ENCODE measurements at regions of chr1 and their contacts with region 1.

Region 1: DNA sequence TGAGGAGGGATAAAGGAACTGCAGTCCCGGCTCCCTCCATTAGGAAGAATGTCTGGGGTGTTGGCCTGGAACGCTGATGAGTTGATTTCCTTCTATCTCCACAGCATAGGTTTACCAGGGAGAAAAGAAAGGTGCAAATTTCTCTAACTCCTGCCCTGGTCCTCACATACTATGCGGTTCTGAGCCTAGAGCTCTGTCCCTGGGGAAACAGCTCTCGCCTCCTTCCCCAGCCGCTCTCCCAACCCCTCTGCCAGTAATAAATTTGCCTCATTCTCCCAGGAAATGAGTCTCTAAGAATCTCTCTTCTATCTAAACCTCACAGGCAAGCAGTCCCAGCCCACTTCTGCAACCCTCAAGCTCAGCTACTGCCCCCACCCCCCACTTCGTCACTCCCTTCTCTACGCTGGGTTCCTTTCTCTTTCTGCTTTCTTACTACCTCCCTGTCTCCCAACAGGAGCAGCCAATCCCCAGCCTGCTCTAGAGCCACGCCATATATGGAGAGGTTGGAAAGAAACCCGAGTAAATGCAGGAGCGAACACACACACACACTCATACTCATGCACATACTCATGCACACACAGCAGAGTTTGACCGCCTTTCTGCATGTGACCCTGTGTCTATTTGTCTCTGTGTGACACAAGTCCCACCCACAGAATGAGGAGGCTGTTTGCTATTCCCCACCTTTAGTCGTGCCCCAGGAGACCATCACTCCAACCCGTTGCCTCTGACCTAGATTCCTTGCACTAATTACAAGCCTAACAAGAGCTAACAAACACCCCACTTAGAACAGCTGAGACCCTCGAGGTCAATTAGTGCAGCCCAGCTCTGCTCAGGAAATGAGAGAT is 13.4 kb downstream of the PLEKHO1 start:
- H3K4me3 ChIP-seq: no peak overlapping the region
- H3K27ac ChIP-seq: peak overlapping the region; percentile 28
- H3K4me1 ChIP-seq: no peaks in the 10 kb centered on the region
- CTCF ChIP-seq: no peak

Region 2: DNA sequence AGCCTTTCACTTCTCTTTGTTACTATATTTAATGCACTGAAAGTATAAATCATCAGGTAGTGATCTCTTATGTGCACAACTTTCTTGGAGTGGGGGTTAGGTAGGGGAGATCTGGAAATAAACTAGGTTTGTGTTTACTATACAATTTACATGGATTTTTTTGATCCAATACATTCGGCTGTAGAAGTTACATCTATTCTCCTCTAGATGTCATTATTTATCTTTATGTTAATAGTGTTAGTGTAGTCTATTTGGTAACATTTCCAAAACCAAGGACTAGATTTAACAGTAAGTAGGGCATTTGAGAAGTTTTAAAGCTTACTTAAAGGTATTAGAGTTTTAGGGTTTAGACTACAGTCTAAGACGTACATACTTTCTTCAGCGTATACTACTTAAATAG is 90.1 kb before region 1 on chr1:
- CTCF ChIA-PET with region 1: interaction called, 28 read pairs
- POLR2A ChIA-PET with region 1: interaction called, 3 read pairs
- H3K4me3 ChIP-seq: no peak overlapping the region
- H3K27ac ChIP-seq: no peak overlapping the region
- H3K4me1 ChIP-seq: no peaks in the 10 kb centered on the region
- CTCF ChIP-seq: no peak

Region 3: GRCh38 chr1:150150133-150151021 is 12.7 kb before region 1 on chr1:
- CTCF ChIA-PET with region 1: interaction called, 18 read pairs
- POLR2A ChIA-PET with region 1: interaction called, 4 read pairs
- H3K4me3 ChIP-seq: peak overlapping the region; percentile 61
- H3K27ac ChIP-seq: peak overlapping the region; percentile 62; the same call in 1 of the 2 replicates
- H3K4me1 ChIP-seq: peaks cover 3% of the 10 kb centered on the region; the same call in 1 of the 2 replicates
- CTCF ChIP-seq: no peak

Region 4: DNA sequence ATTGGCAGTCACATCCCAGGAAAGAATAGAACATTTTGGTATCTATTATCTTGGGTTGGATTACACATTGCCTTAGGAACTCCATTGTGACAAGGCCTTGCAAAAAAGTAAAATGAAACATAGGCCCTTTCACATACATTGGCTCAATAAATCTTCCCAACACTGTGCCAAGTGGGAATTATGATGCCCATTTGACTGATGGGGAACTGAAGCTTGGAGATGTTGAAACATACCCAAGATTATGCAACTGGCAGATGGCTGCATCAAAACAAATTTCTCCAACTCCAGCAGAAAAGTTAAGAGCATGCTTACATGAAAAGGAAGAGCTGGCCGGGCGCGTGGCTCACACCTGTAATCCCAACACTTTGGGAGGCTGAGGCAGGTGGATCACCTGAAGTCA is 13.5 kb after region 1 on chr1:
- CTCF ChIA-PET with region 1: interaction called, 10 read pairs
- POLR2A ChIA-PET with region 1: interaction called, 5 read pairs
- H3K4me3 ChIP-seq: no peak overlapping the region
- H3K27ac ChIP-seq: no peak overlapping the region
- H3K4me1 ChIP-seq: no peaks in the 10 kb centered on the region
- CTCF ChIP-seq: no peak